ENCODE measurements at regions of chr9 and their contacts with region 1.

Region 1: DNA sequence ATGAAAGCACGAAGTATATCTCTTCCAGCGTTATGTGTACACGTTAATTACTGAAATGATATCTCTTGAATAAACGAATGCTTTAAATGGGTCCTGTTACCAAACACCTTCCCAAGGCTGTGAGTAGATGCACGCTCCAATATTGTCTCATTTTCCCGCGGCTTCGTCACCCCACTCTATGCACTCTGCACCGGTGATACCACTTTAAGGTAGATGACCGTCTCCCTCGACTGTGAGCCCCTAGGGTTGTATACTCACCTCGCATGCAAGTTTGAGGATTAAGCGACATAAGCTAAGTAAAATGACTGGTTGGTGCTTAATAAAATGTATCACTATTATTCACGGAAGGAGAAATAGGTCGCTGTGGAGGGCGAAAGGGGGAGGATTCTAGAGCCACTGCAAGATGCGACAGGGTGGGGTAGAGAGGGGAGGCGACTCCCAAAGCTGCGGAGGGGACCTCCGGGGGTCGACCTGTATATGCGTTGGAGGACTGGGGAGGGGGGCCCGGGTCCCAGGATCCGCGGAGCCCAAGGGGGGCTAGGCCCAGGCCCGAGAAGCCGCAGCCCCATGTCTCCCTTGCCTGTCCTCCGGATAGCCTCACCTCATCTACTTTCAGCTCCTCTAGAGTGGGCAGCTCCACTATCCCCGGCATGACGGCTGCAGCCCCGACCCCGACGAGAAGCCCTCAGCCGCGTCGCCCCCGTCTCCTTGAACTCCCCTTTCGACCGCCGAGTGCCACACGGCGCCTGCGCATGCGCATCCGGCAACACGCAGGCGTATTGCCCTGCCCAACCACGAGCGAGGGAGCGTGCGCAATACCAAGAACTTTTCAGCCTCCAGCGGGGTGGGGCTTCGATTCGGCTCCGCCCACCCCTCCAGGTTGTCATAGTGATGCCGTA is at the starts of genes MORN5 and NDUFA8:
- DNase-seq: peak; percentile 93 to 99
- H3K4me3 ChIP-seq: peak within 1 kb of the TSS; percentile 88 to 93 (median 90)
- H3K27ac ChIP-seq: peak within 1 kb of the TSS; percentile 37
- H3K4me1 ChIP-seq: peaks cover 0 to 4% (median 0%) of the 10 kb centered on the region in 4 experiments; a peak in 2 of 7 replicates
- H3K27me3 ChIP-seq: no peaks in the 10 kb centered on the region; a peak in 1 of 7 replicates
- CTCF ChIP-seq: peak in 1 of 3 experiments; percentile 11; a peak in 1 of 4 replicates
- EP300 ChIP-seq: no peak
- POLR2A ChIP-seq: peak; percentile 46 to 56
- RAD21 ChIP-seq: no peak
- total RNA-seq, gene MORN5: not detected in 2 replicates
- total RNA-seq, gene NDUFA8: 59.8 and 61.0 TPM in 2 replicates

Region 2: DNA sequence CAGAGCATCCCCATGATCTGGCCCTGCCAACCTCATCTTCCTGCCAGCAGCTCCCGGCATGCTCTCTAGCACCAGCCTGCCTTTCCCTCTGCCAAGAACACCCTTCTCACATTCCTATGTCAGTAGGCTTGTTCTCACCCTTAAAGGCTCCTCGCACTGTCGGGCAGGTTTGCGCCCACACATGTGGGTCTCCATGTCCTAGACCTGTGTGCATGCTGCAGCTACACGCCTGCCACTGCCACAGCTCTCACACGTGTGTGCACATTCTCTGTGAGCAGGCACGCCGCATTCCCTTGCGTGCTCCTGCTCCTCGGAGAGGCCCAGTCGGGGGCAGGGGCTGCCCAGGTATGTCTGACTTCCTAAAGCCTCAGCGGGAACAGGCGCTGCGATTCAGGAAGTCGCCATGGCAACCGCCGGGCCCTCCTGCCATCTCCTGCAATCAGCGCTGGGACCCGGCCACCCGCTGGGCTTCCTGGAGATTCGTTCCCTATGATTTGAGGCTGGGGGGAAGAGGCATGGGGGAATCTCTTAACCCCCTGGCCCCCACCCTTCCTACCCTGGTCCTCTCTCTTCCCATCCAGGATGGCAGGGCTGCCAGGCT is 27.8 kb before region 1 on chr9:
- CTCF ChIA-PET with region 1: interaction called, 54 read pairs
- POLR2A ChIA-PET with region 1: no interaction called
- DNase-seq: peak in 1 of 2 experiments; percentile 81
- H3K4me3 ChIP-seq: peak overlapping the region in 2 of 4 experiments; percentile 19 to 31; a peak in 4 of 8 replicates
- H3K27ac ChIP-seq: no peak overlapping the region
- H3K4me1 ChIP-seq: peaks cover 14 to 21% (median 17%) of the 10 kb centered on the region in 4 experiments
- H3K27me3 ChIP-seq: peaks cover 0 to 17% (median 14%) of the 10 kb centered on the region in 4 experiments; a peak in 6 of 7 replicates
- CTCF ChIP-seq: no peak
- EP300 ChIP-seq: no peak
- POLR2A ChIP-seq: no peak
- RAD21 ChIP-seq: no peak

Region 3: DNA sequence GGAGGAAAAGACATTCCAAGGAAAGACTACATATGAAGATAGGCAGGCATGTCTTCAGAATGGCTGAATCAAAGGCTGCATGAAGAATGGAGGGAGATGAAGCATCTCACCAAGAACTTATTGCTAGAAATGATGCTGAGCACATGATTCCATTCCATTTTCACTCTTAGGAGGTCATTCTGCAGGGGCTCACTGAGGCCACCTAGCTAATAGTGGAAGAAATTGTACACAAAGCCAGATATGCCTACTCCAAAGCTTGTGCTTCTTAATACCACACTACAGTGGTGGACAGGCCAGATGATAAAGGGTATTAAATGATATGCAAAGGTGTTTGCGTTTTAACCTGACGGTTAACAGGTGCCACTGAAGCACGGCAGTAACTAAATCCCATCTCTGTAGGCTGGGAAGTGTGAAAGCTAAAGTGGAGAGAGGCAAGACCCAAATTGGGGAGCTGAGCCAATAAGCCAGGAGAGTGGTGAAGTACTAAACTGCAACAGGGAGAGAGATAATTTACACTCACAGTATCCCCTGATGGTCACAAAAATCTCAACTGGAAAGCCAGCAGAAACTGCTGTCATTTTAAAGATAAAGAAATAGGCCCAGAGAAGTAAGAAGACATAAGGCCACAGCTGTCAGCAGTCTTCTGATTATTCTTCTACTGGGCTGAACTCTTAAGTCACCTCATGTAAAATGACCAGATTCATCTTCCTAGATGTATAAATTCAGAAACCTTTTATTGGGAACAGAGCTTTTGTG is 14.3 kb before region 1 on chr9:
- CTCF ChIA-PET with region 1: interaction called, 36 read pairs
- POLR2A ChIA-PET with region 1: interaction called, 9 read pairs
- DNase-seq: no peak
- H3K4me3 ChIP-seq: no peak overlapping the region
- H3K27ac ChIP-seq: no peak overlapping the region
- H3K4me1 ChIP-seq: no peaks in the 10 kb centered on the region
- H3K27me3 ChIP-seq: no peaks in the 10 kb centered on the region
- CTCF ChIP-seq: peak in 2 of 3 experiments; percentile 16 to 52; a peak in 2 of 4 replicates
- EP300 ChIP-seq: no peak
- POLR2A ChIP-seq: no peak
- RAD21 ChIP-seq: peak; percentile 9 to 31; a peak in 2 of 4 replicates

Region 4: GRCh38 chr9:122180651-122181050 is 21.4 kb after region 1 on chr9:
- CTCF ChIA-PET with region 1: interaction called, 16 read pairs
- POLR2A ChIA-PET with region 1: no interaction called
- DNase-seq: no peak
- H3K4me3 ChIP-seq: no peak overlapping the region
- H3K27ac ChIP-seq: no peak overlapping the region
- H3K4me1 ChIP-seq: no peaks in the 10 kb centered on the region; a peak in 1 of 7 replicates
- H3K27me3 ChIP-seq: no peaks in the 10 kb centered on the region
- CTCF ChIP-seq: no peak
- EP300 ChIP-seq: no peak
- POLR2A ChIP-seq: no peak
- RAD21 ChIP-seq: no peak

Region 5: DNA sequence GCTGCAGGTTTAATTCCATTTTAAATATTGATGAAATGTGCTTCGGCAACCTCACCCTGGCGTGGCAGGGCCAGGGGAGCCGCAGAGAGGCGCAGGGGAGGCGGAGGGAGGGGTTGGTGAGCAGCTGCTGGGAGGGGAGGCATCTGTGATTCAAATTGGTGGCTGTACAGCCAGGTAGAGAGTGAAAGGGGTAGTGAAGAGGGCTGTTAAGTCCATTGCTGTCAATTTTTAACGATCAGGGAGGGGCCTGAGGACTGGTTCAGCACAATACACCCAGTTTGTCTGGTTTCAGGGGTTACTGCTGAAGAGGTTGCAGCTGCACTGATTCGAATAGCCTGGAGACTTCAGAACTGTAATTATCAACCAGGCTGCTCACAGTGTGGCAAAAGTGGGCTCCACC is 38.2 kb after region 1 on chr9:
- CTCF ChIA-PET with region 1: interaction called, 12 read pairs
- POLR2A ChIA-PET with region 1: interaction called, 3 read pairs
- DNase-seq: no peak
- H3K4me3 ChIP-seq: no peak overlapping the region
- H3K27ac ChIP-seq: no peak overlapping the region
- H3K4me1 ChIP-seq: peaks cover 0 to 6% (median 2%) of the 10 kb centered on the region in 4 experiments; a peak in 4 of 7 replicates
- H3K27me3 ChIP-seq: no peaks in the 10 kb centered on the region; a peak in 1 of 7 replicates
- CTCF ChIP-seq: no peak
- EP300 ChIP-seq: no peak
- POLR2A ChIP-seq: no peak
- RAD21 ChIP-seq: no peak

Region 6: DNA sequence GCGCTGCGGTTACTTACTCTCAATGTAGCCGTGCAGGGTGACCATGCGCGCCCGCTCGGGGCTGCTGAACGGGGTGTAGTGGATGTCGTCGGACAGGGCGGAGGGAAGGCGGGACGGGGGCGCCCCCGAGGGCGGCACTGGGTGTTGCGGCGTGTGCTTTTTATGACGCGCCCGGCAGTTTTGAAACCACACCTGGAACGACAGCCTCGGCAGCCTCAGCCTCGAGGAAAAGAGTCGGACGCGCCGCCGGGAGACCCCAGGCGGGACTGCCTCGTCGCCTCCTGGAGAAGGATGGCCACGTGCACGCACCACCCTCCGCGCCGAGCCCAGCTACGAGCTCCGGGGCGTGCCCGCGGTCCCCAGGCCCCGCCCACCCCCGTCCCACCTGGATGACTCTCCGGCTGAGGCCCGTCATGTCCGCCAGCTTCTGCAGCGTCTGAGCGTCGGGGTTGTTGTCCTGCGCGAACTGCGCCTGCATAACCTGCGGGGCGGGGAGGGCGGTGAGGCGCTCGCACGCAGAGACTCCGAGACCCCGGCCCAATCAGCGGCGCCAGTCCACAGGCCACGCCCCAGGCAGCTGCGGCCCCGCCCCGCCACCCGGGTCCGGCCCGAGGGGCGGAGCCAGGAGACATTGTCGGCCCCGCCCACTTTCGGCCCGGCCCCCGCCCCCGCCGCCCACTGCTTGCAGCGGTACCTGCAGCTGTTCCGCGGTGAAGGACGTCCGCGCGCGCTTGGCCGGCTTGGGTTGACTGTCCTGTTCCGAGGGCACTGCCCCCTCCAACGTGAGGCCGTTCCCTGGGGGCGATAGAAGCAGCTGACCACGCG is 54.5 kb after region 1 on chr9:
- CTCF ChIA-PET with region 1: interaction called, 10 read pairs
- POLR2A ChIA-PET with region 1: interaction called, 3 read pairs
- DNase-seq: peak; percentile 87 to 97
- H3K4me3 ChIP-seq: peak overlapping the region; percentile 41 to 67 (median 52); a peak in 7 of 8 replicates
- H3K27ac ChIP-seq: no peak overlapping the region
- H3K4me1 ChIP-seq: peaks cover 0 to 13% (median 10%) of the 10 kb centered on the region in 4 experiments; a peak in 6 of 7 replicates
- H3K27me3 ChIP-seq: peaks cover 52 to 73% (median 68%) of the 10 kb centered on the region in 4 experiments
- CTCF ChIP-seq: no peak
- EP300 ChIP-seq: no peak
- POLR2A ChIP-seq: no peak
- RAD21 ChIP-seq: peak; percentile 18 to 20; a peak in 3 of 4 replicates

Region 7: GRCh38 chr9:122221183-122221811 is 62.0 kb after region 1 on chr9:
- CTCF ChIA-PET with region 1: interaction called, 10 read pairs
- POLR2A ChIA-PET with region 1: interaction called, 3 read pairs
- DNase-seq: peak in 1 of 2 experiments; percentile 85
- H3K4me3 ChIP-seq: peak overlapping the region; percentile 8 to 59 (median 26); a peak in 6 of 8 replicates
- H3K27ac ChIP-seq: no peak overlapping the region
- H3K4me1 ChIP-seq: peaks cover 5 to 52% (median 40%) of the 10 kb centered on the region in 4 experiments
- H3K27me3 ChIP-seq: peaks cover 93 to 100% (median 99%) of the 10 kb centered on the region in 4 experiments
- CTCF ChIP-seq: no peak
- EP300 ChIP-seq: no peak
- POLR2A ChIP-seq: no peak
- RAD21 ChIP-seq: no peak

Region 8: GRCh38 chr9:122239722-122240121 is 80.4 kb after region 1 on chr9:
- CTCF ChIA-PET with region 1: no interaction called
- POLR2A ChIA-PET with region 1: no interaction called
- DNase-seq: no peak
- H3K4me3 ChIP-seq: no peak overlapping the region
- H3K27ac ChIP-seq: no peak overlapping the region
- H3K4me1 ChIP-seq: no peaks in the 10 kb centered on the region
- H3K27me3 ChIP-seq: no peaks in the 10 kb centered on the region
- CTCF ChIP-seq: no peak
- EP300 ChIP-seq: no peak
- POLR2A ChIP-seq: no peak
- RAD21 ChIP-seq: no peak